Activated CD4-positive, alpha-beta T cell treated with anti-CD3 and anti-CD28 coated beads for 36 hours (primary cell): ENCODE measurements at regions of chr14 and their contacts with region 1.

Region 1: DNA sequence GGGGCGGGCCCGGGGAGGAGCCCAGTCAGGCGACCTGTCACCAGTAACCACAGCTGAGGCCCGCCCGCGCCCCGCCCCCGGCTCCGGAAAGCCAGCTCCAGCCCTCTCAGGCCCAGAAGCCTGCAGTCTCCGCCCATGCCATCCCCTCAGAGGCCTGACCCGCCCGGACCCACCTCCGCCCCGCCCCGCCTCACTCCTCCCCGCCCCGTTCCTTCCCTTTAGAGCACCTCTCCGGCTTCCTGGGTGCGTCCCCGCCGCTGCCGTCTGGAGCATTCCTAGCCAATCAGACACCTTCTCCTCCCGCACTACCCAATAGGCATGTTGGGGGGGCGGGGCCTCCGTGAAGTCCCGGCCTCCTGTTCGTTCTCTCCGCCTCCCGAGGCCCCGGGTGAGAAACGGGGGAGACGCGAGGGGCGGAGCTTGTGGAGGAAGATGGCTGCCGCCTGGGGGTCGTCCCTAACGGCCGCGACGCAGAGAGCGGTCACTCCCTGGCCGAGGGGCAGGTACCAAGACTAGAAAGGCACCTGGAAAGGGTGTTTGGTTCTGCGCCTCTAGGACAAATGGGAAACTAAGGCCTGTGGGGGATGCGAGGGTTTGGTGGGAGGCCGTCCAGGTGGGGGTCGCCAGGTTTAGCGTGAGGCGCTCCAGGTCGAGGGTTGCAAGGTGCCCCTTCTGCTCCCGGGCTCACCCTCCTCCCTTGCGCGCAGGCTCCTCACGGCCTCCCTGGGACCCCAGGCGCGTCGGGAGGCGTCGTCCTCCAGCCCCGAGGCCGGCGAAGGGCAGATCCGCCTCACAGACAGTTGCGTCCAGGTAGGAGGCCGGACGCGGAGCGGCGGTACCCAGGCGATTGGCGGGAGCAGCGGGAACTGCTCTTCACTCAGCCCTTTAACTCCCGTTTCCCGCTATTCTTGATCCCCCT is at the start of gene ISCA2:
- DNase-seq: peak; percentile 100
- ATAC-seq: peak; percentile 96
- H3K4me3 Mint-ChIP-seq: no peak within 1 kb of the TSS
- H3K27ac Mint-ChIP-seq: peak within 1 kb of the TSS; percentile 89
- H3K4me1 Mint-ChIP-seq: peaks cover 23% of the 10 kb centered on the region
- H3K27me3 Mint-ChIP-seq: no peaks in the 10 kb centered on the region
- total RNA-seq, gene ISCA2: 29.5 to 35.9 TPM

Region 2: DNA sequence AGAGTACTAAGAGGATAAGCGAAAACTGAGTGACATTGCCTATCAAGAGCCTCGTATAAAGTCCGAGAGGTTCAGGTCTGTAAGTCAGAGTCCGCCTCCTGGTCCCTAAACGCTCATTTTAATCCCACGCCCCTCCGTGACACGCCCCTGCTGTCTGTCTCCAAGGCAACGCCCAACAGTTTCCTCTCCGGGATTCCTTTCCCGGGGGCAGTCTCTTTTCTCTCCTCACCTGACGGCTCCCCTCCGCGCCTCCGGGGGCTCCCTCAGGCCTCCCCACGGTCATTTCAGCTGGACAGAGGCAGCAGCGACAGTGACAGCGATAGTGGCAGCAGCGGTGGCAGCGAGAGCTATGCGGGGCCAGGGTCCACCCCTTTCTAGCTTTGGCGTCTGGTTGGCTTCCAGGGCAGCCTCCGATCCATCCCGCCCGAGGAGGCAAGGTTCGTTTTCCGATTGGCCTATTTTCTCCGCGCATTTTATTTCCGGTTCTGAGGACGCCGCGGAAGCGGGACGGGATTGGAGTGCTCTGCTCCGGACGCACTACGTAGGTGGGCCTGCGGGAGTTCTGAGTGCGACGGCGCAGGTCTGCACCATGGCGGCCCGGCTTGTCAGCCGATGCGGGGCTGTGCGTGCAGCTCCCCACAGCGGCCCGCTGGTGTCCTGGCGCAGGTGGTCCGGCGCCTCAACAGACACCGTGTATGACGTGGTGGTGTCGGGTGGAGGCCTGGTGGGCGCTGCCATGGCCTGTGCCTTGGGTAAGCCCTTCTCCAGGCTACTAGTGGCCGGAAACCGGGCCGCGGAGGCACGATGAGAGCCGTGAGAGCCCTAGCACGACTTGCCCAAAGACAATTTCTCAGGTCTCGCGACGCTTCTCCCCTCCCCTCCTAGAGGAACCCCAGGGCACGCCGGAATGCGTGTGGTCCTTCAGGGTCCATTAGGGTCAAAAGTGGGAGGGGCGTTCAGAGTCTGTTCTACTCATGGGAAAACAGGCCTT is 543.6 kb before region 1 on chr14 and contains the starts of genes COQ6 and FAM161B:
- CTCF ChIA-PET with region 1: no interaction called
- POLR2A ChIA-PET with region 1: no interaction called
- intact Hi-C with region 1: loop called in 1 of 2 experiments (anchors 2 kb)
- DNase-seq: peak; percentile 95
- ATAC-seq: peak; percentile 96
- H3K4me3 Mint-ChIP-seq: peak within 1 kb of the TSS; percentile 91
- H3K27ac Mint-ChIP-seq: peak within 1 kb of the TSS; percentile 88
- H3K4me1 Mint-ChIP-seq: peaks cover 14% of the 10 kb centered on the region
- H3K27me3 Mint-ChIP-seq: no peaks in the 10 kb centered on the region
- total RNA-seq, gene COQ6: 14.1 to 17.0 TPM
- total RNA-seq, gene FAM161B: 1.2 to 1.4 TPM

Region 3: DNA sequence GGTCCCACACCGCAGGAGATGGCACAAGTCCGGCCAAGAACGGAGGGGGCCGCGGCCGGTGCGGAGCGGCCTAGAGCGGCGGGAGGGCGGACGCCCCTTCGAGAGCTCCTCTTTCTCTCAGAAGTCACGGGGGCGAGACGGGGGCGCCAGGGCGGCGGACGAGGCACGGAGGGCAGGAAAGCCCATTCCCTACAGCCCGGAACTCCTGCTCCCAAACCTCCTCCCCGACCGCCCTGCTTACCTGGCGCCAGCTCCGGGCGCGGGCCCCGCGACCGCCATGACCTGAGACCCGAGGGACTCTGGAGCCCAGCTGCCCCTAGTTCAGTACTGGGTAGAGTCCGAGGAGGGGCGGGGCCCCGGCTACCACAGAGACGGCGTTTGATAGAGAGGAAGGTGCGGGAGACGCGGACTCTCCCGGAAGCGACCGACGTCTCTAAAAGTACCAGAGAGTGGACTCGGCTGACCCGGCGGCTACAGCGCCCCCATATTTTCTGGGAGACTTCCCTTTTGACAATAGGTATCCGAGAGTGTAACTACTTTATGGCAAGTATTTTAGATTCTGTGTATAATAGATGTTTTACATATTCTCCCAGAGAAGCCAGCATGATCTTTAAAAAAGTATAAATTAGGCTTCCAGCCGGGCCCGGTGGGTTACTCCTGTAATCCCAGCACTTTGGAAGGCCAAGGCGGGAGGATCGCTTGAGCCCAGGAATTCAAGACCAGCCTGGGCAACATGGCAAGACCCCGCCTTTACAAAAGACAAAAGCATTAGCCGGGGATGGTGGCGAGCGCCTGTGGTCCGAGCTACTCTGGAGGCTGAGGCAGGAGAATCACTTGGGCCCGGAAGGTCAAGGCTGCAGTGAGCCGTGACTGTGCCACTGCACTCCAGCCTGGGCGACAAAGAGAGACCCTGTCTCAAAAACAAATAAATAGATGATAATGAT is 190.7 kb before region 1 on chr14 and contains the start of gene ABCD4:
- CTCF ChIA-PET with region 1: no interaction called
- POLR2A ChIA-PET with region 1: interaction called, 4 read pairs
- intact Hi-C with region 1: loop called (anchors 1 to 2 kb)
- DNase-seq: peak; percentile 91
- ATAC-seq: peak; percentile 95
- H3K4me3 Mint-ChIP-seq: peak within 1 kb of the TSS; percentile 98
- H3K27ac Mint-ChIP-seq: peak within 1 kb of the TSS; percentile 98
- H3K4me1 Mint-ChIP-seq: peaks cover 32% of the 10 kb centered on the region
- H3K27me3 Mint-ChIP-seq: no peaks in the 10 kb centered on the region
- total RNA-seq, gene ABCD4: 43.0 to 43.1 TPM

Region 4: GRCh38 chr14:74571901-74572725 is 78.5 kb after region 1 on chr14:
- CTCF ChIA-PET with region 1: interaction called, 3 read pairs
- POLR2A ChIA-PET with region 1: no interaction called
- intact Hi-C with region 1: loop called in 1 of 2 experiments (anchors 5 kb)
- DNase-seq: peak; percentile 52
- ATAC-seq: peak; percentile 80
- H3K4me3 Mint-ChIP-seq: peak overlapping the region; percentile 38
- H3K27ac Mint-ChIP-seq: peak overlapping the region; percentile 74
- H3K4me1 Mint-ChIP-seq: peaks cover 27% of the 10 kb centered on the region
- H3K27me3 Mint-ChIP-seq: peaks cover 6% of the 10 kb centered on the region

Region 5: GRCh38 chr14:74762917-74763802 is 269.6 kb after region 1 on chr14 and contains the start of gene YLPM1:
- CTCF ChIA-PET with region 1: no interaction called
- POLR2A ChIA-PET with region 1: no interaction called
- intact Hi-C with region 1: loop called in 1 of 2 experiments (anchors 1 kb)
- DNase-seq: peak; percentile 95
- ATAC-seq: peak; percentile 92
- H3K4me3 Mint-ChIP-seq: peak within 1 kb of the TSS; percentile 96
- H3K27ac Mint-ChIP-seq: peak within 1 kb of the TSS; percentile 97
- H3K4me1 Mint-ChIP-seq: peaks cover 42% of the 10 kb centered on the region
- H3K27me3 Mint-ChIP-seq: no peaks in the 10 kb centered on the region
- total RNA-seq, gene YLPM1: 53.0 to 60.9 TPM

Region 6: GRCh38 chr14:75063407-75064213 is 570.0 kb after region 1 on chr14 and contains the start of gene ACYP1:
- CTCF ChIA-PET with region 1: no interaction called
- POLR2A ChIA-PET with region 1: no interaction called
- intact Hi-C with region 1: loop called in 1 of 2 experiments (anchors 10 kb)
- DNase-seq: peak; percentile 95
- ATAC-seq: peak; percentile 99
- H3K4me3 Mint-ChIP-seq: peak within 1 kb of the TSS; percentile 96
- H3K27ac Mint-ChIP-seq: peak within 1 kb of the TSS; percentile 93
- H3K4me1 Mint-ChIP-seq: peaks cover 27% of the 10 kb centered on the region
- H3K27me3 Mint-ChIP-seq: no peaks in the 10 kb centered on the region
- total RNA-seq, gene ACYP1: 37.0 to 40.2 TPM